ENCODE measurements at regions of chr6 and their contacts with region 1.

Region 1: GRCh38 chr6:82178077-82178758 is 69.3 kb downstream of the IBTK start:
- DNase-seq: no peak
- ATAC-seq: no peak
- H3K4me3 ChIP-seq: no peak overlapping the region
- H3K27ac ChIP-seq: no peak overlapping the region
- H3K4me1 ChIP-seq: no peaks in the 10 kb centered on the region
- H3K27me3 ChIP-seq: no peaks in the 10 kb centered on the region

Region 2: DNA sequence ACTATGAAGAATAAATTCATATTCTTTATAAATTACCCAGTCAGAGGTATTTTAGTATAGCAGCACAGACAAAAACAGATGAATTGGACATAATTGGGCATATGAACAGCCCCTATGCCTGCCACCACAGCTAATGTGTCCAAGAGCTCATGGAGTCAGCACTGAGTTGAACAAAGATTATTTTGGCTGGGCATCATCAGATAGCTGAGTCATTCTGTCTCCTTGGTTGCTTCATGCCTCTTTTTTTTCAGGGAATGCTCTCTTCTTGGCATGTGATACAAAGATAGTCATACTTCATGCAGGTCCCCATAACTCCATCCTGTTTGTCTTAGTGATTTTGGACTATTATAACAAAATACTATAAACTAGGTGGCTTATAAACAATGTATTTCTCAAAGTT is 701.3 kb before region 1 on chr6:
- intact Hi-C with region 1: no loop called
- DNase-seq: no peak
- ATAC-seq: no peak
- H3K4me3 ChIP-seq: no peak overlapping the region
- H3K27ac ChIP-seq: no peak overlapping the region
- H3K4me1 ChIP-seq: no peaks in the 10 kb centered on the region
- H3K27me3 ChIP-seq: no peaks in the 10 kb centered on the region

Region 3: DNA sequence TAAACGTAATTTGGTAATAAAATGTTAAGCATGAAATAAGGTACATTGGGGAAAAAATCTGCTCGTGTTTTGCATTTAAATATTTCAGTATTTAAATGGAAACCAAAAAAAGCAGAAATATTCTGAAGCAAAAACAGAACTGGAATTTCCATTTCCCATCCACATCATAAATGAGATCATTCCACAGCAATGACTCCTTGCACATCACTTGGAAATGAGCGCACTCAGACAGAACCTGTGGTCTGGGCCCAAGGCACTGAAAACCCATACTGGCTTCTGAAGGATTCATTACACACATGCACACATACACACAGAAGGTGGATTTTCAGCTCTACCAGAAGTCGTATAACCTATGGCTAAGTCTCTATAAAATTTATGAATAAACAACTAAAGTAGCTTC is 105.5 kb before region 1 on chr6:
- intact Hi-C with region 1: loop called (anchors 10 kb)
- DNase-seq: no peak
- ATAC-seq: no peak
- H3K4me3 ChIP-seq: no peak overlapping the region
- H3K27ac ChIP-seq: no peak overlapping the region
- H3K4me1 ChIP-seq: peaks cover 3 to 5% of the 10 kb centered on the region in 2 donors
- H3K27me3 ChIP-seq: no peaks in the 10 kb centered on the region

Region 4: GRCh38 chr6:82129797-82130196 is 48.4 kb before region 1 on chr6:
- intact Hi-C with region 1: no loop called
- DNase-seq: no peak
- ATAC-seq: no peak
- H3K4me3 ChIP-seq: no peak overlapping the region
- H3K27ac ChIP-seq: no peak overlapping the region
- H3K4me1 ChIP-seq: no peaks in the 10 kb centered on the region
- H3K27me3 ChIP-seq: no peaks in the 10 kb centered on the region

Measured in aorta (tissue), 5 donors.